Naive thymus-derived CD4-positive, alpha-beta T cell (primary cell): ENCODE measurements at regions of chr21 and their contacts with region 1.

Region 1: DNA sequence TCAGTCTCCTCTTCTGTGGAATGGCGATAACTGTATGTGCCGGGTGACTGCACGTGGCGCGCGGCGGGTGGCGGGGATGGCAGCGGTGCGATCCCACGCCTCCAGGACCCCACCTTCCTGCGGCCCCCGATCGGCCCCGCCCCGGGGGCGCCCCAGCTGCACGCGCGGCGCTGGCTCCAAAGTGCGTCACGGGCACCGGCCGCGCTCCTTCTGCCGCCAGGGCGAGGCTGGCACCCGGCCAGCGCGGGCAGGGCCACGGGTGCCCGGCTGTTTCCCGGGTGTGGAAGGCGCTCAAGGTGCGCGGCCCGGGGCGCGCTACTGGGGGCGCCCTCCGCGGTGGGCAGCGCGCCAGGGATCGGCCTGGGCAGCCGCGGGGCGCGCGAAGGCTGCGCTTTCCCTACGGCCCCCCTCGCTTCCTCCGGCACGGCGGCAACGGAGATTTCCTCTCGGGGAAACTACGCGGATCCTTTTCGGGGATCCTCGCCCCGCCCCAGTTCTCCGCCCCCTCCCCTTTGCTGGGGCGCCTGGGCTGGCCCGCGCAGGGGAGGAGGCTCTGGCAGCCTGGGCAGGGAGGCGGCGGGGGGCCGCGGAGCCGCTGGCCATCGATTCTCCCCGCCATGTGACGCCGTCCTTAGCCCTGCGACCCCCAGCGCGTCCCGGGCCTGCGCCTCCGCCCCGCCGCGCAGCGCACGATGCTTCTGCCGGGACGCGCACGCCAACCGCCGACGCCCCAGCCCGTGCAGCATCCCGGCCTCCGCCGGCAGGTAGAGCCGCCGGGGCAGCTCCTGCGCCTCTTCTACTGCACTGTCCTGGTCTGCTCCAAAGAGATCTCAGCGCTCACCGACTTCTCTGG is at the start of gene EVA1C:
- DNase-seq: peak; percentile 56 to 73 (median 70)
- ATAC-seq: peak; percentile 81
- H3K4me3 ChIP-seq: peak within 1 kb of the TSS; percentile 76
- H3K4me3 Mint-ChIP-seq: peak within 1 kb of the TSS; percentile 88 to 97 (median 94)
- H3K27ac ChIP-seq: peak within 1 kb of the TSS; percentile 85
- H3K27ac Mint-ChIP-seq: peak within 1 kb of the TSS; percentile 89 to 95 (median 93)
- H3K4me1 ChIP-seq: peaks cover 14 to 29% of the 10 kb centered on the region in 2 donors
- H3K4me1 Mint-ChIP-seq: peaks cover 22 to 57% (median 28%) of the 10 kb centered on the region in 7 donors
- H3K27me3 ChIP-seq: no peaks in the 10 kb centered on the region
- H3K27me3 Mint-ChIP-seq: peaks cover 0 to 7% (median 0%) of the 10 kb centered on the region in 5 donors
- total RNA-seq, gene EVA1C: 2.6 to 16.3 (median 12.3) TPM

Region 2: GRCh38 chr21:32114419-32115035 is 297.9 kb before region 1 on chr21:
- CTCF ChIA-PET with region 1: no interaction called
- POLR2A ChIA-PET with region 1: no interaction called
- intact Hi-C with region 1: no loop called
- DNase-seq: no peak
- ATAC-seq: no peak
- H3K4me3 ChIP-seq: no peak overlapping the region
- H3K4me3 Mint-ChIP-seq: no peak overlapping the region
- H3K27ac ChIP-seq: no peak overlapping the region
- H3K27ac Mint-ChIP-seq: no peak overlapping the region
- H3K4me1 ChIP-seq: no peaks in the 10 kb centered on the region
- H3K4me1 Mint-ChIP-seq: peaks cover 0 to 1% (median 0%) of the 10 kb centered on the region in 7 donors
- H3K27me3 ChIP-seq: no peaks in the 10 kb centered on the region
- H3K27me3 Mint-ChIP-seq: peaks cover 0 to 20% (median 9%) of the 10 kb centered on the region in 5 donors

Region 3: GRCh38 chr21:32359711-32360260 is 52.6 kb before region 1 on chr21:
- CTCF ChIA-PET with region 1: no interaction called
- POLR2A ChIA-PET with region 1: no interaction called
- intact Hi-C with region 1: no loop called
- DNase-seq: no peak
- ATAC-seq: no peak
- H3K4me3 ChIP-seq: no peak overlapping the region
- H3K4me3 Mint-ChIP-seq: no peak overlapping the region
- H3K27ac ChIP-seq: no peak overlapping the region
- H3K27ac Mint-ChIP-seq: peak overlapping the region in 1 of 9 donors; percentile 25
- H3K4me1 ChIP-seq: no peaks in the 10 kb centered on the region
- H3K4me1 Mint-ChIP-seq: peaks cover 0 to 11% (median 0%) of the 10 kb centered on the region in 7 donors
- H3K27me3 ChIP-seq: no peaks in the 10 kb centered on the region
- H3K27me3 Mint-ChIP-seq: no peaks in the 10 kb centered on the region

Region 4: DNA sequence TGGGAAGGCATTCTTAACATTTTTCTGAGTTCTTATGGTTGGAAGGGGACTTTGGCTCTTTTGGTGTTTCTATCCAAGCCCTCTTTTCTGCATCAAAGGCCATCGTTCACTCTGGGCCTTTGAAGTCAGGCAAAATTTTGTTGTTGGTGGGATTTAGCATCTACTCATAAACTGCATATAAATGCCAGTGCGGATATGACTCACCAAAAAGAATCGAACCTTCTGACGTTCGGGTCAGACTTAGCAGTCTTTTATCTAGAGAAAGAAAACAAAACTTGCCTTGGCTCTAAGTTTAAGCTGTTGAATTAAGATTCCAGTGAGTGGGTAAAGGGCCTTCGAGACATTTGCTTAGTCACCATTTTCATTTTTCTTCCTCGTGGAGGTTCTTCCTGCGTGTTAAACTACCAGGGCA is 51.5 kb after region 1 on chr21:
- CTCF ChIA-PET with region 1: no interaction called
- POLR2A ChIA-PET with region 1: no interaction called
- intact Hi-C with region 1: loop called in 1 of 2 experiments (anchors 10 kb)
- DNase-seq: no peak
- ATAC-seq: no peak
- H3K4me3 ChIP-seq: no peak overlapping the region
- H3K4me3 Mint-ChIP-seq: no peak overlapping the region
- H3K27ac ChIP-seq: no peak overlapping the region
- H3K27ac Mint-ChIP-seq: no peak overlapping the region
- H3K4me1 ChIP-seq: no peaks in the 10 kb centered on the region
- H3K4me1 Mint-ChIP-seq: peaks cover 0 to 1% (median 0%) of the 10 kb centered on the region in 7 donors
- H3K27me3 ChIP-seq: no peaks in the 10 kb centered on the region
- H3K27me3 Mint-ChIP-seq: no peaks in the 10 kb centered on the region

Region 5: GRCh38 chr21:32494934-32495703 is 82.7 kb after region 1 on chr21:
- CTCF ChIA-PET with region 1: no interaction called
- POLR2A ChIA-PET with region 1: no interaction called
- intact Hi-C with region 1: loop called in 1 of 2 experiments (anchors 5 kb)
- DNase-seq: no peak
- ATAC-seq: no peak
- H3K4me3 ChIP-seq: no peak overlapping the region
- H3K4me3 Mint-ChIP-seq: no peak overlapping the region
- H3K27ac ChIP-seq: no peak overlapping the region
- H3K27ac Mint-ChIP-seq: peak overlapping the region in 2 of 9 donors; percentile 4 to 17
- H3K4me1 ChIP-seq: peaks cover 0 to 16% of the 10 kb centered on the region in 2 donors
- H3K4me1 Mint-ChIP-seq: peaks cover 0 to 10% (median 5%) of the 10 kb centered on the region in 7 donors
- H3K27me3 ChIP-seq: no peaks in the 10 kb centered on the region
- H3K27me3 Mint-ChIP-seq: no peaks in the 10 kb centered on the region